ENCODE measurements at regions of chr18 and their contacts with region 1.

Region 1: DNA sequence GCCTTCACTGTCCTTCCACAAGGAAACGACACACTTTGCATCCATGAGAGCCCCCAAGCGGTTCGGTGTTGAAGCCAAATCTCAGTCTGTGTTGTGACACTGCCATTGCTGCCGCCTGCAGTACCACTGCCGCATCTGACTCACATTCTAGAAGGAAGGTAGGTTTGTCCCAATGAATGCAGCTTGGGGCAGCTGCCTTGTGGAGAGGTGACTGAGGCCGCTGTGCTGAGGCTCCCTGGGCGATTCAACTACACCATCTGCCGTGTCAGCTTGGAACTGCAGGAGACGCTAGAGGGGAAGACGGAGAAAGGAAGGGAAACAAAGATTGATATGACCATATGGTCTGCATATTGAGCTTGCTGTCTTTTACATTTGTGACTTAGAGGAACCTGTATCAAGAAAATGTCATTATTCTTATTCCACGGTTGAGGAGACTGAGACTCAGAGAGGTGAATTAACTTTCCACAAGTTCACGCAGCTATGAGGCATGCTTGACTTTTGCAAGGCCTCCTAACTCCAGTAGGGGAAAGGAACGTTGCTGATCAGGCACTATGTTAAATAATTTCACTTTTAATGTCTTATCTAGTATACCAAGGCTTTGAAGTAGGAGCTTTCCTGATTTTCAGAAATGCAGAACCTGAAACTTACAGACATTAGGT is 43.5 kb upstream of the LMAN1 start:
- DNase-seq: peak; percentile 80
- CTCF ChIP-seq: peak; percentile 85

Region 2: DNA sequence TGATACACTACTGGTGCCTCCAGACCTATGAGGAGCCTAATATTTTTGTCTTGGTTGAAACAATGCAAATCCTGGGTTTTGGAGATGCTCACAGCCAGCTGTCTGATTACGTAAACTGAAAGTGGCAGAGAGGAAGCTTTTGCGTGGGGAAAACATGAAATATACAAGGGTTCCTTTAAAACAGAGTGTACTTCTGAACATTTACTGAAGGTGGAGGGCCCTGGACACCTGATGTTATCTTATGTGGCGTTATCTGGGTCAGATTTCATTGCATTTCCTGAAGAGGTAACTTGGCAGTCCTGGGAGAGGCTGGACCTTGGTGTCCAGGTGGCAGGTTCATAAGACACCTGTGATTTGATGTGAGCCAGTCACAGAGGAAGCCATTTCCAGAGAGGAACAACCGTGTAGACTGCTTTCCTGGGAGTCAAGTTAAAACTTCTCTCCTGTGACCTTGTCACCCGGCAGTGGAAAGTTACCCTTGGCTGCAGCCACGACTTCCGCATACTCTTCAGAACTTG is 1253.5 kb before region 1 on chr18:
- CTCF ChIA-PET with region 1: no interaction called
- POLR2A ChIA-PET with region 1: no interaction called
- DNase-seq: no peak
- CTCF ChIP-seq: no peak

Region 3: GRCh38 chr18:59085797-59086196 is 316.8 kb before region 1 on chr18:
- CTCF ChIA-PET with region 1: interaction called, 15 read pairs
- POLR2A ChIA-PET with region 1: no interaction called
- DNase-seq: no peak
- CTCF ChIP-seq: no peak

Region 4: DNA sequence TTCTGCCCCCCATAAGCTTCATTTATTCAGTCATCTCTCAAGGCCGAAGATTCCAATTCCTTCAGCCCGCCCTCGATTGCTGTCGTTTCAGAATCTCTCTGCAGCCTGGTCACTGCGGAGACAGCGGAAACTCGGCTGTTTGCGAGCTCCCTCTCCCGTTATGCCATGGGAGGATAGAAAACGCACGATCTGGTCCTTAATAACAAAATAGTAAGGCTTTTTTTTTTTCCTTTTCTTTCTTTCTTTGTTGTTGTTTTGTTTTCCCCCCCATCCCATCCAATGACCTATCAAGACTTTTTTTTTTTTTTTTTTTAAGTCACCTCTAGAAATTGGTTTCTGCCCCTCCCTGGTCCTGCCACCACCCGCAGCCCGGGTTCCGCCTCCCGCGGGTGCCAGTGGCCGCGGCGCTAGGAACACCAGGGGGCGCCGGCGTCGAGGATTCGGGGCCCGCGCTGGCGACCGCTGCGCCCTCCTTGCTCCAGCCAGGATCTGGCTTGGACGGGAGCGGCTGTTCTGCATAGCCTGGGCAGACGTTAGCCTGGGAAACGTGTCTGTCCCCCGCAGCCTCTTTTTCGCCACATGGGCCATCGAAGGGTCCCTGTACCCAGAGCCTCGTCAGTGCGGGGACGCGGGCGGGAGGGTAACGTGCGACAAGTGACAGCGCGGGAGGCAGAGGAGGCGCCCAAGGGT is 94.2 kb before region 1 on chr18:
- CTCF ChIA-PET with region 1: interaction called, 239 read pairs
- POLR2A ChIA-PET with region 1: no interaction called
- DNase-seq: peak; percentile 81
- CTCF ChIP-seq: peak; percentile 89

Region 5: DNA sequence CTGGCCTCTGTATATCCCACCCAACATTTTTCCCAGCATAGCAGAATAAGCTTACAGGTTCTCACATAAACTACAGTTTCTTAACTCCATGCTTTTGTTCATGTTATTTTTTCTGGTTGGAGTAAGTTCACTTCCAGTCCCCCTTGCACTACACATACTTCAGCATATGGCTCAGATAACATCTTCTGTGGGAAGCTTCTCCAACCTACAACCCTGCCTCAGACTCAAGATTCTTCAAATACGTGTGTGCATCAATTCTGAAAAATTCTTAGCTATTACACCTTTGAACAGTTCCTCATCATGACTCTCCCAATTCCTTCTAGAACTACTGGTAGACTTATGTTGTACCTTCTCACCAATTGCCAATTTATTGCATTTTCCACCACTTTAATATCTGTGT is 76.6 kb before region 1 on chr18:
- CTCF ChIA-PET with region 1: interaction called, 19 read pairs
- POLR2A ChIA-PET with region 1: no interaction called
- DNase-seq: no peak
- CTCF ChIP-seq: no peak

Region 6: GRCh38 chr18:59358712-59359575 is 43.6 kb before region 1 on chr18 and contains the start of gene LMAN1:
- CTCF ChIA-PET with region 1: interaction called, 12 read pairs
- POLR2A ChIA-PET with region 1: no interaction called
- DNase-seq: peak; percentile 99
- CTCF ChIP-seq: no peak

Region 7: DNA sequence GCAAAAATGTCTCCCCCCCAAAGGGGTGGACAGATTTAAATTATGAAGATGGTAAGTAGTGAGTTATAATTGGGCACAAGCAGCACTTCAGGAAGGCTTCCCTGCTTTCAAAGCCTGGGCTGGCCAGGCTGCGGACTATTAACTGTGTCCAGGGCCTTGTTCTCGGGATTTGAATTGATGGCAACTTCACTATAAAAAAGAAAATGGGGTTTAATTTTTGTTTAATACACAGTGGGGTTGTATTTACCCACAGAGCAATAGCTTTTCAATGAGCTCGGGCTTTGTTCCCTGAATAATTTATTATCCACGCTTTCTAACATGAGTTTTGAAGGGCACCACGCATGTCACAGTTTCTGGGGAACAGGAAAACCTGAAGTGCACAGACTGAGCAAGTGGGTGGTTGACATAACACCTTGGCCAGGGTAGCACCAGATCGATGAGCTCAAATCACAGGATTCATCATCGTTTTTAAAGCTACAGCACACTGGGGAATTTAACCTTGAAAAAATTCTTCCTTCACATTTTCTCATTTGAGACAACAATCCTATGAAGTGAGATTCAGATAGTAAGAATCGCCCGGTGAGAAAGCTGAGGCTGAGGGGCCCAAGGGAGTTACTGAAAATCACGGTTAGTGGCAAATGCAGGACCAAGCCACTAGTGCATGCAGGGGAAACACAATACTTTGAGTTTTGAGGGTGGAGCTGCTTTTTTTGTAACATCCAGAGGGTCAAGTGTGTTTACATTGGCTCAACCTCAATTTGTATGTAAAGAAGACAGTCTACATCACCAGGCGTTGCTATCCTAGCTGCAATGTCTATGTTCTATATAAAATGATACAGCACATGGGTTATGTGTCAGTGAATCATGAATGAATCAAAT is 14.6 kb before region 1 on chr18:
- CTCF ChIA-PET with region 1: interaction called, 21 read pairs
- POLR2A ChIA-PET with region 1: no interaction called
- DNase-seq: no peak
- CTCF ChIP-seq: no peak

Region 8: GRCh38 chr18:59419386-59419785 is 16.8 kb after region 1 on chr18:
- CTCF ChIA-PET with region 1: interaction called, 12 read pairs
- POLR2A ChIA-PET with region 1: no interaction called
- DNase-seq: no peak
- CTCF ChIP-seq: no peak

Region 9: DNA sequence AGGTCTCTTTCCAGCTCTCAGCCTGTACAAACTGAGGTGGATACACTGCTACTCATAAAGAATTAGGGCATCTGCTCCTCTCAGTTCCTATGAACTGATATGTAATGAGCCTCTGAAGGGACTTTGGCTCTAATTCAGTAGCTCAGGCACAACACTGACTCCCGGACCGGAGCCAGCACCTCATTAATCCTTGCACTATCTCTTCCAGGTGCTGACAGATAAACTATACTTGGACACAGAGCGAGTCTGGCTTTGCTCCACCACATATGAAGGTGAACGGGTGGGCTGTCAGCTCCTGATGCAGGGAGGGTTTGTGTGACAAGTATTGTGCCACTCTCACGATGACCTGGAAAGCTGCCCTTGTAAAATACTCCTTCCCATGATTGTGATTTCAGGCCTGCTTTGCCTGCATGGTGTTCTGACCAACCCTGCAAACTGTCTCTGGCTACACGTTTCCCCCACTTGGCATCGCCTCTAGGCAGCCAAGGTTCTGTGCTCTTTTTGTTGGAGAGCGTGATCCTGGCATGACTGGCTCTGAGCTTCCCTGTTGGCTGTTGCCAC is 68.1 kb after region 1 on chr18:
- CTCF ChIA-PET with region 1: no interaction called
- POLR2A ChIA-PET with region 1: no interaction called
- DNase-seq: no peak
- CTCF ChIP-seq: no peak

Measured in GM10248 (cell line).